Dendritic cell treated with granulocyte-macrophage colony-stimulating factor and Interleukin-4, amounts not matched to agents 40 ng/mL and 50 ng/mL, for 4 days (primary cell): ENCODE measurements at regions of chr20 and their contacts with region 1.

Region 1: DNA sequence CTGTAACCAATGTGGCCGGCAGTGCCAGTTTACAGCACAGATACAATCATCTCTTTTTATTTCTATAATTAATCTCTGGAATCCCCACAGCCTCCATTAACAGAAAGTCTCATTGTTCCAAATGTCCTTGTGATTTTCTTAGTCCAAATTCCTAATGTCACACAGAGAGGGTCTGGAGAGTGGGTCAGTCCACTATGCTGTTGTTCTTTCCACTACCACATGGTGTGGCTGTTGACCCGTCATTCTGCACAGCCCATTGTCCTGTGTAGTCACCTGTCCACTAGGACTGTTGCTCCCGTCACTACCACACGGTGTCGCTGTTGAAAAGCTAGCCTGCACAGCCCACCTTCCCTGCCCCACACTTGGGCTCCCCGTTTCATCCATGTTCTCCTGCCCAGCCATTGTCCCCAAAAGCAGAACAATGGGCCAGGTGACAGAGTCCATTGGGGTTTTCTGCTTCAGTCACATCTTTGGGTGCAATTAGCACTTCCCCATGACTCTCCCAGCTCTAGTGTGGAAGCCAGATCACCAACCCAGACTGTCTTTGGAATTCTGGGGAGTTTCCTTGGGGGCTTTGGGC is 8.6 kb upstream of the LBP start:
- H3K4me3 Mint-ChIP-seq: no peak overlapping the region
- H3K27ac Mint-ChIP-seq: no peak overlapping the region
- H3K4me1 Mint-ChIP-seq: no peaks in the 10 kb centered on the region
- H3K27me3 Mint-ChIP-seq: peaks cover 47% of the 10 kb centered on the region

Region 2: GRCh38 chr20:38412877-38413577 is 75.4 kb after region 1 on chr20:
- intact Hi-C with region 1: loop called (anchors 1 kb)
- H3K4me3 Mint-ChIP-seq: no peak overlapping the region
- H3K27ac Mint-ChIP-seq: no peak overlapping the region
- H3K4me1 Mint-ChIP-seq: no peaks in the 10 kb centered on the region
- H3K27me3 Mint-ChIP-seq: no peaks in the 10 kb centered on the region